Activated T-helper 1 cell treated with anti-CD3 and anti-CD28 coated beads, Interleukin-12 subunit alpha, Interleukin-12 subunit beta, Interleukin-2, Interleukin-4 antibody, amounts not matched to agents 30 ng/mL and 10 ng/mL and 1 ng/mL, durations not matched to agents 14 hours and 24 hours and 36 hours (primary cell): ENCODE measurements at regions of chr12 and their contacts with region 1.

Region 1: GRCh38 chr12:68565375-68565903 is 45.3 kb upstream of the RAP1B start:
- DNase-seq: no peak
- H3K4me3 Mint-ChIP-seq: peak overlapping the region; percentile 1
- H3K27ac Mint-ChIP-seq: no peak overlapping the region
- H3K4me1 Mint-ChIP-seq: peaks cover 24% of the 10 kb centered on the region
- H3K27me3 Mint-ChIP-seq: no peaks in the 10 kb centered on the region

Region 2: GRCh38 chr12:68140556-68140955 is 424.9 kb before region 1 on chr12:
- intact Hi-C with region 1: no loop called
- DNase-seq: no peak
- H3K4me3 Mint-ChIP-seq: peak overlapping the region; percentile 24
- H3K27ac Mint-ChIP-seq: peak overlapping the region; percentile 89
- H3K4me1 Mint-ChIP-seq: peaks cover 78% of the 10 kb centered on the region
- H3K27me3 Mint-ChIP-seq: no peaks in the 10 kb centered on the region

Region 3: GRCh38 chr12:68364893-68365725 is 200.3 kb before region 1 on chr12:
- intact Hi-C with region 1: loop called (anchors 2 kb)
- DNase-seq: peak; percentile 85
- H3K4me3 Mint-ChIP-seq: peak overlapping the region; percentile 77
- H3K27ac Mint-ChIP-seq: peak overlapping the region; percentile 92
- H3K4me1 Mint-ChIP-seq: peaks cover 76% of the 10 kb centered on the region
- H3K27me3 Mint-ChIP-seq: no peaks in the 10 kb centered on the region

Region 4: GRCh38 chr12:68374307-68374982 is 191.0 kb before region 1 on chr12:
- intact Hi-C with region 1: loop called (anchors 2 kb)
- DNase-seq: peak; percentile 60
- H3K4me3 Mint-ChIP-seq: peak overlapping the region; percentile 31
- H3K27ac Mint-ChIP-seq: peak overlapping the region; percentile 93
- H3K4me1 Mint-ChIP-seq: peaks cover 68% of the 10 kb centered on the region
- H3K27me3 Mint-ChIP-seq: no peaks in the 10 kb centered on the region

Region 5: GRCh38 chr12:68538726-68539614 is 26.5 kb before region 1 on chr12:
- intact Hi-C with region 1: loop called (anchors 1 kb)
- DNase-seq: peak; percentile 54
- H3K4me3 Mint-ChIP-seq: peak overlapping the region; percentile 23
- H3K27ac Mint-ChIP-seq: peak overlapping the region; percentile 52
- H3K4me1 Mint-ChIP-seq: peaks cover 48% of the 10 kb centered on the region
- H3K27me3 Mint-ChIP-seq: peaks cover 2% of the 10 kb centered on the region

Region 6: DNA sequence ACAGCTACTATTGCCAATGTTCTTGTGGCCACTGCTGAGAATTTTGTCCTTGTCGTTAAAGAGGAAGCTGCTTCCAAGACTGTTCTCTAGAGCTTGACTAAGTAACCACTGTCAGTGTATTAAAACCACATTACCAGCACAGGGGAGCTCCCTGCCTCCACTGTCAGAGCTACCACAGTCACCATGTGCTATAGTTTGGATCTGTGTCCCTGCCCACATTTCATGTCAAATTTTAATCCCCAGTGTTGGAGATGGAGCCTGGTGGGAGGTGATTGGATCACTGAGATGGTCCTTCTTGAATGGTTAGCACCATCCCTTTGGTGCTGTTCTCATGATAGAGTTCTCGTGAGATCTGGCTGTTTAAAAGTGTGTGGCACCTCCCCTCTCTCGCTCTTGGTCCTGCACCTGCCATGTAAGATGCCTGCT is 22.0 kb after region 1 on chr12:
- intact Hi-C with region 1: loop called (anchors 2 kb)
- DNase-seq: peak; percentile 38
- H3K4me3 Mint-ChIP-seq: peak overlapping the region; percentile 7
- H3K27ac Mint-ChIP-seq: peak overlapping the region; percentile 31
- H3K4me1 Mint-ChIP-seq: peaks cover 32% of the 10 kb centered on the region
- H3K27me3 Mint-ChIP-seq: no peaks in the 10 kb centered on the region

Region 7: GRCh38 chr12:68951652-68952051 is 386.2 kb after region 1 on chr12:
- intact Hi-C with region 1: no loop called
- DNase-seq: no peak
- H3K4me3 Mint-ChIP-seq: no peak overlapping the region
- H3K27ac Mint-ChIP-seq: no peak overlapping the region
- H3K4me1 Mint-ChIP-seq: peaks cover 7% of the 10 kb centered on the region
- H3K27me3 Mint-ChIP-seq: no peaks in the 10 kb centered on the region